A673 (cell line): ENCODE measurements at regions of chr6 and their contacts with region 1.

Region 1: DNA sequence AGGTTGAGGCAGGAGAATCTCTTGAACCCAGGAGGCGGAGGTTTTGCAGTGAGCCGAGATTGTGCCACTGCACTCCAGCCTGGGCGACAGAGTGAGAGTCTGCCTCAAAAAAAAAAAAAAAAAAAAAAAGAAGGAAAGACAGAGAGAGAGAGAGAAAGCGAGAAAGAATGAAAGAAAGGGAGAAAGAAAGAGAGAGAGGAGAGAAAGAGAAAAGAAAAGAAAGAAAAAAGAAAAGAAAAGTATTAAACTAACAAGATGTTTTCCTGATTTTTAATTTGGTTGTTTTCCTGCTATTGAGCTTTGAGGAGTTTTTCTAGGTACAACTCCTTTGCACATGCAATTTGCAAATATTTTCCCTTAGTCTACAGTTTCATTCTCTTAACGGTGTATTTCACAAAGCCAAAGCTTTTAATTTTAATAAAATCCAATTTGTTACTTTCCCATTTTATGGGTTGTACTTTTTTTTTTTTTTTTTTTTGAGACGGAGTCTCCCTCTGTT is 10.8 kb upstream of the TRERF1 start:
- DNase-seq: no peak
- H3K4me3 ChIP-seq: no peak overlapping the region
- H3K27ac ChIP-seq: no peak overlapping the region
- H3K4me1 ChIP-seq: no peaks in the 10 kb centered on the region
- H3K27me3 ChIP-seq: no peaks in the 10 kb centered on the region
- CTCF ChIP-seq: no peak

Region 2: DNA sequence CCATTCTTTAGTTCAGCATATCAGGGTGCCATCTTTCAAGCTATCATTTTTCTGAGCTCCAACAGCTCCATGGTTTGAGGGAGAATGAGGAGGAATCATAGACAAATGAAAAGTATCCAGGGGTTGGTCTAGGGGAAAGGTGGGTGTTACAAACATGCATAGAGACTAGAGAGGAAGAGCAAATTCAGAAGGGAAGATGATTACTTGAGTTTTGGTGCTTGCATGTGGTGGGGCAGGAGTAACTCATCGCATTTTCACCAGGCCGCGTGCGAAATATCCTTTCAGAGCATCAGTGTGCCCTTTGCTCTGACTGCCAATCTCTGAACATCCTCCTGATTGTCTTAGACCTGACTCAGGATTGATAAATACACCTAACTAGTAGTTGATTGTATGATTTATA is 311.7 kb after region 1 on chr6:
- CTCF ChIA-PET with region 1: interaction called, 13 read pairs
- POLR2A ChIA-PET with region 1: no interaction called
- intact Hi-C with region 1: no loop called
- DNase-seq: no peak
- H3K4me3 ChIP-seq: no peak overlapping the region
- H3K27ac ChIP-seq: no peak overlapping the region
- H3K4me1 ChIP-seq: peaks cover 1% of the 10 kb centered on the region
- H3K27me3 ChIP-seq: no peaks in the 10 kb centered on the region
- CTCF ChIP-seq: no peak